GM10248 (cell line): ENCODE measurements at regions of chr7 and their contacts with region 1.

Region 1: DNA sequence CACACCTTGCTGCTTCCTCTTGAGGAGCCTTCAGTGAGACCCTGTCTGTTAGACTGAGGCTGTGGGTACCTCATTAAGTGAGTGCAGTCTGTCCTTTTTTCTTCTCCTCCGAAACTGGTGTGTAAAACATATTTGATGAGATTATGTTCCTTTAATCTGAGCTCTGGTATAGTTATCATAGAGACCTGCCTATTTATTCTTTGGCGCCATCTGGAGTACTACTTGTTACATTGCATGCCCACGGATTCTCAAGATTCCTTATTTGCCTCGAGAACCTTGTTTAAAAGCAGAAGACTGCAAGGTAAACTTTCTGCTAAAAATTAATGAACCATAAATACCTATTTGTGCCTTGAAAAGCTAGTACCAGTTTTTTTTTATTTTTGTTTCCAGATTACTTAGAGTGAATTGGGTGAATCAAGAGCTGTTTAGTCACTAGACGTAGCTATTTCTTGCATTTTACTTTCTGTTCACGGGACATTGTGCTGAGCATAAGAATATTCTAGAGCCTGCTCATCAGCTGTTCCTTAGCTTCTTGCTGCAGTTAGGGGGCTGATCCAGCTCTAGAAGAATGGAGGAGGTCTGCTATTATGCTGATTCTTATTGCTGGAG is 16.9 kb upstream of the STMP1 start:
- DNase-seq: no peak
- CTCF ChIP-seq: peak; percentile 64

Region 2: DNA sequence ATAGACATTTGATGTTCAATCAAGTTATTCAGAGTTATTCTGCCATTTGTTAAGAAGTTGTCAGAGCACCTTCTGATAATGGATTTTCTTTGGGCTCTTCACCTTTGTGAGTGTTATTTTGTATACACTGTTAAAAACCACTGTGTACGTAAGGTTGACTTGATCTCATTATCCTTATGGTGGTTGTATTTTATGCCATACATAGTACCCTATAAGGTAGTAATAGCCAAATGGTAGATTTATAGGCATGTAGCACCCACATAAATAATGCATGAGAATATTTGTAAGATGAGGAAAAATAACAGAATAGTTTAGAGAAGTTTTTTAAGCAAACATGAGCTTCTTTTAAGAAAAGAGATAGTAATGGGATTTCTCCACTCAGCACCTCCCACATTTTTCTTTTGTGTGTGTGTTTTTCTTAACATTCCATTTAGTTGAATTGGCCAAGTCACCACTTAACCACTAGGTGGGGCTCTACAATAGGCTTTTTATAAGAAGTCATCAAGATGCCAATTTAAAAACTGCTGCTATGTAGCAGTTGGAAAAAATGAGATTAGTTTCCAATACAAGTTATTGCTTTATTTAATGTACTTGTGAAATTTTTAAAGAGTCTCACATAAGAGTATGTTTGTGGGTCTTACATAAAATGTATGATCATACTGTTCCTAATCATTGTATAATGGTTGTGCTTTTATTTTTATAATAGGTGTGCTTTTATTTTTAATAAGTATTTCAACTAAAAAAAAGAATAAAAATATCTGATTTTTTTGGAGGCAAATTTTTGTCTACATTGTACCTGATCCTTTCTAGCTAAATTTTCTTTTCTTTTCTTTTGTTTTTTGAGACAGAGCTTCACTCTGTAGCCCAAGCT is 24.2 kb before region 1 on chr7:
- CTCF ChIA-PET with region 1: interaction called, 49 read pairs
- POLR2A ChIA-PET with region 1: no interaction called
- DNase-seq: peak; percentile 35
- CTCF ChIP-seq: peak; percentile 78

Region 3: DNA sequence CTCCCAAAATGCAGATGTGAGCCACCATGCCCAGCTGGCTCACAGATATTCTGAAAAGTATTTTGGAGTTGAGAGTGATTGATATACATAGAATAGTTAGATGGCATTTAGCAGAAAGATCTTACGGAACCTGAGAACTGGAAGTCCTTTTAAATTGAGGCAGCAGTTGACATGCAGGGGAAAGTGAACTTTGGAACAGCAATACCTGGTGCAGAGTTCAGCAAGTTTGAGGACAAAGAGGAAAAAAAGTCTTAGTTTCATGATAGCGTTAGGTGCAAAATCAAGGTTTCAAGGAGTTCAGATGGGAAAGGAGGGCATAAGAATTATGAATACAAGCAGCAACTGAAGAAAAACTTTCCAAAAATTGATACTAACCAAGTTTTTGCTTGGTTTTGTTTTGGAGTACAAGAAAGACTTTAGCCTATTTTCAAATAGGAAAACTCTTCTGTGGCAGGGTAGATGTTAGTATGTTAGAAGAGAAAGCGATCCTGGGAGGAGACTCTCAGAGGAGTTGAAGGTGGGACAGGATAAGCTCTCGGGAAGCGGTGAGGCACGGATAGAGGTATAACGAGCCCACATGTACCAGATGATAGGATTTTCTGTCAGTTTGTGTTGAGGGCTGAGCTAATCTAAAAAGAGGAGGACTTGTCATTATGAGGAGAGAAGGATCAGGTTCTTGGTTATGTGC is 11.1 kb before region 1 on chr7:
- CTCF ChIA-PET with region 1: interaction called, 51 read pairs
- POLR2A ChIA-PET with region 1: no interaction called
- DNase-seq: no peak
- CTCF ChIP-seq: no peak

Region 4: DNA sequence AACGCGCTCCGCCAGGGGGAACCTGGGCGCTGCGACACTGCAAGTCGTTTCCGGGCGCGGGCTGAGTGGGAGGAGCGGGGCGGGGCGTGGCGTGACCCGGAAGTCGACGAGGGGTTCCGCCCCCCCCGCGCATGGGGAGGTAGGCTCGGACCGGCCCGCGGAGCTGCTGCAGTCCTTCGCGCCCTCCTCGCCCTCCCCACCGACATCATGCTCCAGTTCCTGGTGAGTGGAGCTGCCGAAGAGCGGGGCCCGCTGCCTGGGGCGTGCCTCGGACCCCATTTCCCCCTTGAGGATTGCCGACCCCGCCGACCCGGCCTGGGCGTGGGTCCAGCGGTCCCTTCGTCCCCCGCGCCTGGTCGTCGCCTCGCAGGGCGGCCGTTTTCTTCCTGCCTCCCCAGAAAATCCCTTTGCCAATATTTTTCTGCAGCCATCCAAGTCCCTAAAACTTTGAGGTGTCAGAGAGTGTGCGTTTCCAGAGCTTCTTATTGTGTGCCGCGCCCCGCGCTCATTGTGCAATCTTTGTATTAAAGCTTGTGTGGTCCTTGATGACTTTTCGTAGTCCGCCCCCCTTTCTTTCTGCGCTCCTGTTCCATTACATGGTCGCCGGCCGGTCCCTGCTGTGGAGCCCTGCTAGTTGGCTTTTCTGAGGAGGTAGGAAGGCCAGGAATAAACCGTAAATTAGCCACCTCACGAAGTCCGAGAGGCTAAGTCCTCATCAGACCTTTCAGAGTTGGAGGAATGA is 17.1 kb after region 1 on chr7 and contains the start of gene STMP1:
- CTCF ChIA-PET with region 1: interaction called, 109 read pairs
- POLR2A ChIA-PET with region 1: interaction called, 3 read pairs
- DNase-seq: peak; percentile 97
- CTCF ChIP-seq: peak; percentile 78

Region 5: GRCh38 chr7:135672560-135673359 is 27.4 kb after region 1 on chr7:
- CTCF ChIA-PET with region 1: interaction called, 109 read pairs
- POLR2A ChIA-PET with region 1: no interaction called
- DNase-seq: peak; percentile 45
- CTCF ChIP-seq: peak; percentile 58